GM18951 (cell line): ENCODE measurements at regions of chr6 and their contacts with region 1.

Region 1: DNA sequence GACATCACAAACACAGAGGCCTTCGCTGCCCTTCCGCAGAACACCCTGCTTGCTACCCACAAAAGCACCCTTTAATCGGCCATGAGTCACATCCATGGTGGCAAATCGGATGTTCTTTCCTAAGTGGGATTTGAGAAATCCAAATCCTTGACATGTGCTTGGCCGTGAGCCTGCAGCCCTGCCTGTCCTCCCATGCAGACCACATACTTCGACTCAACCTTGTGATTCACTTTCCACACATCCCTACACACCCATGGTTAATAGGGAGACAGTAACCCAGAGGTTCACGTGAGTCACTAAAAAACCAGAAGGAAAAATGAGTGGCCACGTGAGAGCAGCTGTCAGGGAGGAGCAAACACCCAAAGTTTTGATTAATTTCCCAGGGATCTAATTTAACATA is 19.4 kb downstream of the RAMACL start:
- POLR2A ChIP-seq: no peak

Region 2: DNA sequence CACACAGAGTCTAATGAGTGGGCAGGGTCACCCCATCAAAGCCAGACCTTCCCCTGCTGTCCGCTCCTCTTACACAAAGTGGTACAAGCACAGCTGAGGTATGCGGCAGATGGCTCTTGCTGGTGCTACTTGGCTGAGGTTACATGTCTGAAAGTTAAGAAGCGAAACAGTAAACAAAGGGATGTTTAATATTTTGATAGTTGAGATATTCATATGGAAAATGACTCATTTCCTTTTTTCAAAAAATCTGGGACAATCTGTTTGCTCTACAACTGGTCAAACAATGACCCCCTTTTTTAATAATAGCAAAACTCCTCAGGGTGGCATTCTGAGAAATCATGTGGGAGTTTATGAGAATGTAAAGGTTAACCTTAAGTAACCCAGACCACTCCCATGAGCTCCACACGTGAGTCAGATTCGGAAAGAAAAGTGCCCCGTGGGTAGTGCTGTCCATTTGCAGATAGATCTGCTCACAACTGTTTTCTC is 644.8 kb before region 1 on chr6:
- in situ Hi-C with region 1: loop called (anchors 10 kb)
- POLR2A ChIP-seq: no peak

Region 3: DNA sequence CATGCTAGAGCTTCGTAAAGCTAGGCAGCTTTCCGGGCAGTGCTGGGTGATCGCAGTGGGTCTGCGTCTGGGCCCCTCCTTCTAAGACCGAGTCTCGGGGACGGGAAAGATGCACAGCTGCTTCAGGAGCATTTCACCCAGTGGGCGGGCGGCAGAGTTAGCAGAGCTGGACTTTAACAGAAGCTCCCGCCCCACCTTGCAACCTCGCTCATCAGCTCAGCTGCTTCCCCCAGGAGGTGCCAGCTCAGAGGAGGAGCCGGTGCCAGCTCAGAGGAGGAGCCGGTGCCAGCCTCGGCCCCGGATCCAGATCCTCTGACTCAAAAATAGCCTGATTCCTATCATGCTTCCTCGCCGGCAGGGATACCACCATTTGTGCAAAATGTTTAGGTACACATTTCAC is 154.5 kb after region 1 on chr6:
- in situ Hi-C with region 1: no loop called
- POLR2A ChIP-seq: no peak